Esophagus muscularis mucosa (tissue), 4 donors: ENCODE measurements at regions of chr20 and their contacts with region 1.

Region 1: GRCh38 chr20:34312544-34313217 is 9.5 kb upstream of the AHCY start:
- DNase-seq: peak; percentile 96
- H3K4me3 ChIP-seq: peak overlapping the region in 3 of 4 donors; percentile 10 to 36 (median 26)
- H3K27ac ChIP-seq: no peak overlapping the region
- H3K4me1 ChIP-seq: peaks cover 7 to 20% (median 19%) of the 10 kb centered on the region in 4 donors
- H3K27me3 ChIP-seq: peaks cover 0 to 15% (median 7%) of the 10 kb centered on the region in 4 donors
- CTCF ChIP-seq: peak in 2 of 3 experiments; percentile 97 to 99
- EP300 ChIP-seq: no peak
- POLR2A ChIP-seq: no peak

Region 2: GRCh38 chr20:34390769-34391452 is 78.2 kb after region 1 on chr20:
- intact Hi-C with region 1: no loop called
- DNase-seq: no peak
- H3K4me3 ChIP-seq: no peak overlapping the region
- H3K27ac ChIP-seq: peak overlapping the region in 2 of 4 donors; percentile 7 to 29
- H3K4me1 ChIP-seq: peaks cover 26 to 56% (median 48%) of the 10 kb centered on the region in 4 donors
- H3K27me3 ChIP-seq: no peaks in the 10 kb centered on the region
- CTCF ChIP-seq: no peak
- EP300 ChIP-seq: no peak
- POLR2A ChIP-seq: no peak

Region 3: GRCh38 chr20:34475979-34476736 is 163.5 kb after region 1 on chr20:
- intact Hi-C with region 1: loop called (anchors 2 kb)
- DNase-seq: no peak
- H3K4me3 ChIP-seq: peak overlapping the region in 1 of 4 donors; percentile 25
- H3K27ac ChIP-seq: peak overlapping the region; percentile 29 to 57 (median 36)
- H3K4me1 ChIP-seq: peaks cover 15 to 25% (median 24%) of the 10 kb centered on the region in 4 donors
- H3K27me3 ChIP-seq: no peaks in the 10 kb centered on the region
- CTCF ChIP-seq: peak; percentile 60 to 84 (median 73)
- EP300 ChIP-seq: no peak
- POLR2A ChIP-seq: no peak

Region 4: DNA sequence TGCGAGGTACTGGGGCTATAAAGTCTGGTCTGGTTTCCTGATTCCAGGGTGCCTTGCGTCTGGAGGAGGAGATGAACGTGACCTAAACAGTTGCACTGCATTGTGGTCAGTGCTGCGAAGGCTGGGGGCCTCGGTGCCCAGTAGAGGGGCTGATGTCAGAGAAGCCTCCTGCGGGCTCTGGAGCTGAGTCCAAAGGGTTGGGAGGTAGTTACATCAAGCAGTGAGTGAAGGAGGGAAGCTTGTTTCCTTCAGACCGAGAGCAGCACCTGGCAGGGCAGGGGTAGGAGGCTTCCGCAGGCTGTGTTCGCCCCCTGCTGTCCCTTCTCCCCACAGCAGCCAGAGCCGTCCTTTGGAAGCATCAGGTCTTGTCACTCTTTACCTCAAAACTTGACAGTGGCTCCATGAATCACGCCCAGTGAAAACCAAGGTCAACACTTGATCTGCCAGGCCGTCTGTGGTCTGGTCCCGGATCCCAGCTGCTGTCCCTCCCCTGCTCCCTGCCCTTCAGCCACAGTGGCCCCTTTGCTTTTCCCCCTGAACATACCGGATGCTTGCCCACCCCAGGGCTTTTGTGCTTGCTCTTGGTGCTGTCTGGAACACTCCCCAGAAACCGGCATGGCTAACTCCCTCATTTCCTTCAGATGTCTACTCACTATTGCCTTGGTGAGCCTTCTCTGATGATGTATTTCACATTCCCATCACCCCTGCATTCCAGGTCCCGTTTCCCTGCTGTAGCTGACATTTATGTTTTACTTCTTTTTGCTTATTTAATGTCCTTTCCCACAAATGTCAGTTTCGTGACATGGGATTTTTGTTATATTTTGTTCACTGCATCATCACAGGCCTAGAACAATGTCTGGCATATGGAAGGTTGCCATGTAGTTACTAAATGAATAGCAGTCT is 210.5 kb after region 1 on chr20:
- intact Hi-C with region 1: loop called (anchors 10 kb)
- DNase-seq: peak; percentile 91
- H3K4me3 ChIP-seq: no peak overlapping the region
- H3K27ac ChIP-seq: peak overlapping the region; percentile 74 to 85 (median 84)
- H3K4me1 ChIP-seq: peaks cover 63 to 90% (median 85%) of the 10 kb centered on the region in 4 donors
- H3K27me3 ChIP-seq: no peaks in the 10 kb centered on the region
- CTCF ChIP-seq: peak; percentile 35 to 56 (median 47)
- EP300 ChIP-seq: no peak
- POLR2A ChIP-seq: no peak

Region 5: GRCh38 chr20:34768096-34768495 is 455.4 kb after region 1 on chr20:
- intact Hi-C with region 1: loop called (anchors 10 kb)
- DNase-seq: no peak
- H3K4me3 ChIP-seq: no peak overlapping the region
- H3K27ac ChIP-seq: no peak overlapping the region
- H3K4me1 ChIP-seq: peaks cover 0 to 14% (median 3%) of the 10 kb centered on the region in 4 donors
- H3K27me3 ChIP-seq: no peaks in the 10 kb centered on the region
- CTCF ChIP-seq: no peak
- EP300 ChIP-seq: no peak
- POLR2A ChIP-seq: no peak

Region 6: GRCh38 chr20:34922654-34923424 is 610.2 kb after region 1 on chr20:
- intact Hi-C with region 1: no loop called
- DNase-seq: no peak
- H3K4me3 ChIP-seq: no peak overlapping the region
- H3K27ac ChIP-seq: peak overlapping the region; percentile 47 to 75 (median 56)
- H3K4me1 ChIP-seq: peaks cover 5 to 20% (median 15%) of the 10 kb centered on the region in 4 donors
- H3K27me3 ChIP-seq: no peaks in the 10 kb centered on the region
- CTCF ChIP-seq: no peak
- EP300 ChIP-seq: no peak
- POLR2A ChIP-seq: no peak